Left cardiac atrium (tissue), 4 donors: ENCODE measurements at regions of chr13 and their contacts with region 1.

Region 1: GRCh38 chr13:102800145-102801041 is 1.5 kb downstream of the BIVM start:
- DNase-seq: peak; percentile 83
- ATAC-seq: peak; percentile 85 to 88

Region 2: GRCh38 chr13:102773441-102774215 is 26.8 kb before region 1 on chr13 and contains the start of gene TEX30:
- intact Hi-C with region 1: loop called in 1 of 2 experiments (anchors 2 kb)
- DNase-seq: peak; percentile 89
- ATAC-seq: peak; percentile 99 to 100
- total RNA-seq, gene TEX30: 9.1 to 9.2 TPM

Region 3: DNA sequence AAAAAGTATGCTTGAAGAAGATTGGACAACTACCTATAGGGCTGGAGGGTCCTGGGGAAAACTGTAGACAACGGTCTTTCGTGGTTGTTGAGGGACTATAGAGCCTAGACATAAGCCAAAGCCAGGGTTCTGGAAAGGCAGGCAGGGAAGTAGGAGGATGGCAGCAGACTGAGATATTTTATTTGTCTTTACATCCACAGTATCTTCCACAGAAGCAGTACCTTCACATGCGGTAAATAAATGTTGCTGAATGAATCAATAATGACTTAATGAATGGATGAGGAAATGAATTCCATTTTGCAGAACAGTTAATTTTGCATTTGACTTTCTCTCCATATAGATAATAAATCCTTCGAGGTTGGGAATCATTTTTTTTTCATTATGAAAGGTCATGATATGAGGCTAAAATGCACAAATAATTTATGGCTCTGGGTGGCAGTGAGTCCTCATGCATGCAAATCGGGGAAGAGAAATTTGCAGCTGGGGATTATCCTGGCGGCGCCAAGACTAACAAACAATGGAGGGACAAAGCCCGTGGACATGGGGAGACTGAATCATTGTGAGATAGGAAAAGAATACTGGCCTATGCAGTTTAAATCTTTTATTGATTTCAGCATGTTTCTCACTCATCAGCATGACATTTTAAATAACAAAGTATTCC is 147.5 kb after region 1 on chr13:
- intact Hi-C with region 1: no loop called
- DNase-seq: no peak
- ATAC-seq: peak; percentile 47 to 55